Activated T-helper 1 cell treated with anti-CD3 and anti-CD28 coated beads, Interleukin-12 subunit alpha, Interleukin-12 subunit beta, Interleukin-2, Interleukin-4 antibody, amounts not matched to agents 30 ng/mL and 10 ng/mL and 1 ng/mL, durations not matched to agents 14 hours and 24 hours and 36 hours (primary cell): ENCODE measurements at regions of chr18 and their contacts with region 1.

Region 1: DNA sequence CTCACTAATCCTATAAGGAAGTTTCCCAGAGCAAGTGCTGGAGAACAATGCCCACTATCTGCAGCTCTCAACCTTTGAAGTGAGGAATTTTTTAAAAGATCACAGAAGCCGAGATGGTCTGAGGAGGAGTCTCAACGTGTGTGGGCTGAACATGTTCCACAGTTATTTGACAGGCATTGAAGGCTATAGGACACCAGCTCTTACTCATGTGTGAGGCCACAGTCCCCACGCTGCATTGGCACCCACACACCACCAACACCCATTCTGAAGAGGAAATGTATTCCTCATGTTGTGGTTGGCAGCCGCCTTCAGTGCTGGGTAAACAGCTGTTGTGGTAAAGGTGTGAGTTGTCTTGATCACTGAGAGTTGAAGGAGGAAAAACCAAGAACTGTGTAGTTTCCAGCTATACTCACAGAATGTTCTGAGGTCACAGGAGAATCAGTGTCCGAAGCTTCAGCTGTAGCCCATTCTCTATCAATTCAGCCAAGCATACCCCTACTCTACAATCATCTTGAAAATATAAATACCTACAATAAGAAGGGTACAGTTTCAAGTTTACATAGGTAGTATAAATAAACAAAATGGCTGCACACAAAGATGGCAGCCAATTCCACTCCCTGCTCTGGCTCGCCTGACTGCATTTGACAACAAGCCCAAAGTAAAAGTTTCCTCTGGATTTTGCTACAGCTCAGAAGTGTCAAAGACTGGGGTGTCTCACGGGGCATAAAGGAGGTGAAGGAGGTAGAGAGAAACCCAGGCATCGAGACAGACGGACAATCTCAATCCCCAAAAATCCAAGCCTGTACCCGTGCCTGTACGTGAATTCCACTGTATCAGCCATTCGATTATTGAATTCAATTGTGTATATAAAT is 12.1 kb downstream of the CD226 start:
- DNase-seq: peak; percentile 80
- H3K4me3 Mint-ChIP-seq: no peak overlapping the region
- H3K27ac Mint-ChIP-seq: no peak overlapping the region
- H3K4me1 Mint-ChIP-seq: peaks cover 28% of the 10 kb centered on the region
- H3K27me3 Mint-ChIP-seq: peaks cover 2% of the 10 kb centered on the region

Region 2: DNA sequence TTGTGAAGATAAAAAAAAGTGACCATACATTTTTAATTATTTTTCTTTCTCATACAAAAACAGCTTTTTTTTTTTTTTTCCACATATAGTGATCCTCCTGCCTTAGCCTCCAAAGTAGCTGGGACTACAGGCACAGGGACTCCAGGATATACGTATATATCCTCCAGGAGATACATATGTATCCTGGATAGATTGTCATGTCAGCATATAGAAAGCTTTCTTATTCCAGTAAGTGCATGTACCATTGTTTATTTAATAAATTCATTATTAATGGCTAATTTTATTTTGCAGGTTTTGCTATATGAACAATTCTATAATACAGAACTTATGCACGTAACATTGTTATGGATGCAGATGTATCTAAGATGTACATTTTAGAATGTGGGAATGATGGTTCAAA is 396.2 kb before region 1 on chr18:
- intact Hi-C with region 1: no loop called
- DNase-seq: no peak
- H3K4me3 Mint-ChIP-seq: no peak overlapping the region
- H3K27ac Mint-ChIP-seq: no peak overlapping the region
- H3K4me1 Mint-ChIP-seq: no peaks in the 10 kb centered on the region
- H3K27me3 Mint-ChIP-seq: peaks cover 12% of the 10 kb centered on the region

Region 3: GRCh38 chr18:69885841-69886531 is 49.6 kb before region 1 on chr18:
- intact Hi-C with region 1: loop called (anchors 1 kb)
- DNase-seq: no peak
- H3K4me3 Mint-ChIP-seq: peak overlapping the region; percentile 87
- H3K27ac Mint-ChIP-seq: peak overlapping the region; percentile 100
- H3K4me1 Mint-ChIP-seq: peaks cover 77% of the 10 kb centered on the region
- H3K27me3 Mint-ChIP-seq: no peaks in the 10 kb centered on the region

Region 4: GRCh38 chr18:69916412-69916811 is 19.1 kb before region 1 on chr18:
- intact Hi-C with region 1: loop called (anchors 2 kb)
- DNase-seq: no peak
- H3K4me3 Mint-ChIP-seq: no peak overlapping the region
- H3K27ac Mint-ChIP-seq: no peak overlapping the region
- H3K4me1 Mint-ChIP-seq: peaks cover 61% of the 10 kb centered on the region
- H3K27me3 Mint-ChIP-seq: no peaks in the 10 kb centered on the region

Region 5: DNA sequence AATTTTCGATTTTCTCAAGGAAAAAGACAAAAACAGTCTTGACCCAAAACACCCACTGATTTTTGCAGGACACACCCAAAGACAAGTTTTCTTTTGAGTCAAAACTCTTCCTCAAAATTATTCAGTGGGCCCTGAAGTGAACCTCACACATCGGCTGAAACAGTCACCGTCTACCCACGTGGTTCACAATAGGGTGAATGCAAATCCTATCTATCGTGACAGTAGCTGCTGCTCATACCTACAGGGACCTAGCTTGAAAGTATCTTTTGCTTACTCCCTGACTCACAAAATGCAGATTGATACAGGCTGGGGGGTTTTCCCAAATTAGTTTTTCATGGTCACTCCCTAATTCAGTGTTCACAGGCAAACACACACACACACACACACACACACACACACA is 22.9 kb after region 1 on chr18:
- intact Hi-C with region 1: loop called (anchors 1 kb)
- DNase-seq: no peak
- H3K4me3 Mint-ChIP-seq: no peak overlapping the region
- H3K27ac Mint-ChIP-seq: no peak overlapping the region
- H3K4me1 Mint-ChIP-seq: peaks cover 16% of the 10 kb centered on the region
- H3K27me3 Mint-ChIP-seq: peaks cover 1% of the 10 kb centered on the region